ENCODE measurements at regions of chr2 and their contacts with region 1.

Region 1: GRCh38 chr2:12870672-12871071 is 153.9 kb downstream of the TRIB2 start:
- DNase-seq: no peak
- H3K4me3 ChIP-seq: no peak overlapping the region
- CTCF ChIP-seq: no peak

Region 2: DNA sequence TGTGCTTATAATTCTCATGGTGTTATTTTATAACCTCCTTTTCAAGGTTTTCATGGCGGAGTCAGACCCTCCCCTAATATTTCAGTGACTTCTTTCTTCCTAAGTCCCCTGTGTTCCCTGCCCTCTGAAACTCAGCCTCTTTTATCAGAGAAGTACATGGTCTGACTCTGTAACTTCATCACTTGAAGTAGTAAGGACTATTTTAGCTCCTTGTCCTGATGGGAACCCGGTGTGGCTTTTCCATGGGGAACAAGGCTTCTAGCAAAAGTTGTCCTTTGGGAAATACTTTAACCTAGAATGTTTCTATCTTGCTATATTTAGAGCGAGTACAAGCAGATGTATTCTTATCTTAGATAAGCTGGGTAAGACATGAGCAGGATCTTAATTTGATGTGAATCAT is 36.4 kb before region 1 on chr2:
- in situ Hi-C with region 1: loop called (anchors 5 kb)
- DNase-seq: no peak
- H3K4me3 ChIP-seq: no peak overlapping the region
- CTCF ChIP-seq: no peak

Region 3: GRCh38 chr2:12931186-12931844 is 60.6 kb after region 1 on chr2:
- in situ Hi-C with region 1: no loop called
- DNase-seq: peak; percentile 53
- H3K4me3 ChIP-seq: no peak overlapping the region
- CTCF ChIP-seq: peak; percentile 89

Measured in astrocyte of the cerebellum (primary cell).